CD8-positive, alpha-beta memory T cell (primary cell): ENCODE measurements at regions of chr1 and their contacts with region 1.

Region 1: DNA sequence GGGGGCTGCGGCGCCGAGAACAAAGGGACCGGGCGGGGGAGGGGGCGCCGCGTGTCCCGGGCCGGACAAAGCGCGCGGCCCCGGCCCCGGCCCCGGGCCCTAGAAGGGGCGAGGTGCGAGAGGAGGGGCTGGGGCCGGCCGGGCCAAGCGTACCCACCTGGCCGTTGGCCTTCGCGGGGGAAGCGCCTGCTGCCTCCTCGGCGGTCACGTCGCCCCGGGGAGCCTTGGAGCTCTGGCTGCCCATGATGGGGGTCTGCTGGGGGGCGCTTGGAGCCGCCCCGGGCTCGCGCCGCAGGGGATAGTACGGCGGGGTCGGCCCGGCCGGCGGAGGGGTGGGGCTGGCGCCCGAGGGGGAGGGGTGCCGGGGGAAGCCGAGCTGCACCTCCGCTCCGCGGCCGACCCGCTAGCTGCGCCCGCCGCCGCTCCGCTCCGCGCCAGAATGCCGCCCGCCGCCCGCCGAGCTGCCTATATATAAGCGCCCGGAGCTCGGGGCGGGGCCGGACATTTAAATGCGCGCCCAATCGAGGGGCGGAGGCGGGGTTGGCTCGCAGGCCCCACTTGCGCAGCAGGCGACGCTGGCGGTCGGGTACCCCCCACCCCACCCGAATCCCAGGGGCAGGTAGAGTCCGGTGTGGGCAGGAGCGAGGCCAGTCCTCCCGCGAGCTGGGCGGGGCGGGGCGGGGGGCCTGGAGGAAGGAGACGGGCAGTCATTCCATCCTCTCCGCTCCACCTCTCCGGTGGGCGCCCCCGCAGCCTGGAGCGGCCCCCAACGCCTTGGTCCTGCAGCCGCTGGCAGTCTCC is at the start of gene MARCKSL1:
- DNase-seq: peak; percentile 80 to 89 (median 82)
- H3K4me3 ChIP-seq: peak within 1 kb of the TSS; percentile 58
- H3K4me3 Mint-ChIP-seq: peak within 1 kb of the TSS; percentile 76 to 86 (median 85)
- H3K27ac ChIP-seq: peak within 1 kb of the TSS; percentile 40
- H3K27ac Mint-ChIP-seq: peak within 1 kb of the TSS in 6 of 8 donors; percentile 68 to 89 (median 76)
- H3K4me1 ChIP-seq: peaks cover 27% of the 10 kb centered on the region
- H3K4me1 Mint-ChIP-seq: peaks cover 31 to 42% (median 42%) of the 10 kb centered on the region in 3 donors
- H3K27me3 ChIP-seq: no peaks in the 10 kb centered on the region
- H3K27me3 Mint-ChIP-seq: peaks cover 0 to 2% of the 10 kb centered on the region in 2 donors
- total RNA-seq, gene MARCKSL1: 11.6 to 12.1 TPM

Region 2: DNA sequence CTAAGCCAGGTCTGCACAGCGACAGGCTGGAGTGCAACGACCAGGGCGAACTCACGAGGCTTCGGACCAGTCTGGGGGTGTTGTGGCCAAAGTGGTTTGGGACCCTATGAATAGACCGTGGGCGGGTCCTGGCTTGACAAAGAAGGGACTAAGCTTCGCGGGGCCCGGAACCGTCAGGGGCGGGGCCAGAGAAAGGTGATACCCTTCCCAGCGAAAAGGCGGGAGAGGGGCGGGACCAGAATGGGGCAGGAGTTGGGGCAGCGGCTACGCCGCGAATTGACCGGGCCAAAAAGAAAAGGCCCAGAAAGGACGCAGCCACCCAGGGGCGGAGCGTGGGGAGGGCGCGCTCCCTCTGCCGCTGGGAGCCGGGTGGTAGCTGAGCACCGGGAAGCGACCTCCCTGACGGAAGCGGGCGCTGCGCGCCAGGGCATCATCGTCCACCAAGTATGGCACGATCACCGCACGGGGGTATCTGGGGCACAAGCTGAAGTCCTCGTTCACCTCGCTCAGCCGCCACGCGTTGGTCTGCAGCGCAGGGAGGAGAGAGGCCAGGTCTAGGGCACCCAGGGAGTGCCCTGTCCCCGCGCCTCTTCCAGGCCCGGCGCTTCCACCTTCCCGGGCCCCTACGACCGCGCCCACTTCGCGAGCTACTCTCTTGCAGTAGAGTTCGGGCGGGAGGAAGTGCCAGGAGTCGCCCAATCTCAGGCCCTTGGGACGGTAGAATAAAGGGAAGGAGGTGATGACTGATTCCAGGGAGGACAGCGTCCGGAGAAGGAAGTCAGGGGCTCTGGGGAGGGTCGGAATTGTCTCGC is 95.6 kb before region 1 on chr1:
- CTCF ChIA-PET with region 1: interaction called, 5 read pairs
- POLR2A ChIA-PET with region 1: interaction called, 17 read pairs
- DNase-seq: peak; percentile 58 to 76 (median 62)
- H3K4me3 ChIP-seq: peak overlapping the region; percentile 96
- H3K4me3 Mint-ChIP-seq: peak overlapping the region; percentile 89 to 94 (median 92)
- H3K27ac ChIP-seq: peak overlapping the region; percentile 24
- H3K27ac Mint-ChIP-seq: peak overlapping the region in 7 of 8 donors; percentile 56 to 88 (median 80)
- H3K4me1 ChIP-seq: peaks cover 16% of the 10 kb centered on the region
- H3K4me1 Mint-ChIP-seq: peaks cover 5 to 32% (median 6%) of the 10 kb centered on the region in 3 donors
- H3K27me3 ChIP-seq: no peaks in the 10 kb centered on the region
- H3K27me3 Mint-ChIP-seq: no peaks in the 10 kb centered on the region

Region 3: GRCh38 chr1:32291708-32292492 is 44.1 kb before region 1 on chr1 and contains the start of gene HDAC1:
- CTCF ChIA-PET with region 1: interaction called, 8 read pairs
- POLR2A ChIA-PET with region 1: interaction called, 20 read pairs
- DNase-seq: peak; percentile 95 to 98 (median 97)
- H3K4me3 ChIP-seq: peak within 1 kb of the TSS; percentile 76
- H3K4me3 Mint-ChIP-seq: peak within 1 kb of the TSS; percentile 96 to 100 (median 99)
- H3K27ac ChIP-seq: peak within 1 kb of the TSS; percentile 93
- H3K27ac Mint-ChIP-seq: peak within 1 kb of the TSS; percentile 95 to 99 (median 98)
- H3K4me1 ChIP-seq: peaks cover 59% of the 10 kb centered on the region
- H3K4me1 Mint-ChIP-seq: peaks cover 41 to 59% (median 55%) of the 10 kb centered on the region in 3 donors
- H3K27me3 ChIP-seq: no peaks in the 10 kb centered on the region
- H3K27me3 Mint-ChIP-seq: no peaks in the 10 kb centered on the region
- total RNA-seq, gene HDAC1: 164 to 172 TPM

Region 4: DNA sequence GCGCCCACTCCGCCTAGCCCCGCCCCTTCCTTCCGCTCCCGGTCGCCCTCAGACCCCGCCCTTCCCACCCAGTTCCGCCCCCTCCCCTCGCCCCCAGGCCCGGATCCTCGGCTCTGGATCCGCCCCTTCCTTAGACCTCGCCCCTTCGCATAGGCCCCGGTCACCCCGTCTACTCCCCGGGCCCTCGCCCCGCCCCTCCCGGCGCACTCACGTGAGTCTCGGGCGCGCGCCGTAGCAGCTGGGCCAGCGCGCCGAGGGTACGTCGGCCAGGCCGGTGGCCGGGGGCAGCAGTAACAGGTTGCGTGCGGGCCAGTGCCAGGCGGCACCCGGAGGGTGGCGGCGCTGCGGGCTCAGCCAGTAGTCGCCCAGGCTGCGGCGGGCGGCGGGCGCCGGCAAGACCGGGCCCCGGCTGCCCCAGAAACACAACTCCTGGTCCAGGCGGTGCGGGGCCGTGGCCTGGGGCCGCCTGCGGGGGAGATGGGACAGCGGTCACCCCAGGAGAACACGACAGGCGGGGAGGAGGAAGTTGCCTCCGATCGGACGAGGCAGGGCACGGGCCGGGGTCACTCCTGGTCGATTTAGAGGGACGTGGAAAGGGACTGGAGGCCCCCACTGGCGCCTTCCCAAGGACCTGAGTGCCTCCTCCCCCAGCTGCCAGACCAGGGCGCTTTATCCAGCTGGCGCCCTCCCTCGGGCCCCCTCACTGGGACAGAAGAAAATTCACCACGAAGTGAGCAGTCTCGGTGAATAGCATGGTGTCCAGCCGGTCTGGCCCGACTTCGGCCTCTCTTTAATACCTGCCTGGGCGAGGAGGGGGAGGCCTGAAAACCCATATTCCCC is 15.6 kb after region 1 on chr1:
- CTCF ChIA-PET with region 1: interaction called, 28 read pairs
- POLR2A ChIA-PET with region 1: interaction called, 34 read pairs
- DNase-seq: peak; percentile 88 to 95 (median 90)
- H3K4me3 ChIP-seq: peak overlapping the region; percentile 49
- H3K4me3 Mint-ChIP-seq: peak overlapping the region; percentile 80 to 96 (median 84)
- H3K27ac ChIP-seq: peak overlapping the region; percentile 72
- H3K27ac Mint-ChIP-seq: peak overlapping the region; percentile 54 to 93 (median 88)
- H3K4me1 ChIP-seq: peaks cover 31% of the 10 kb centered on the region
- H3K4me1 Mint-ChIP-seq: peaks cover 31 to 49% (median 42%) of the 10 kb centered on the region in 3 donors
- H3K27me3 ChIP-seq: no peaks in the 10 kb centered on the region
- H3K27me3 Mint-ChIP-seq: no peaks in the 10 kb centered on the region